Activated CD8-positive, alpha-beta T cell treated with anti-CD3 and anti-CD28 coated beads, Interleukin-2, amount 10 ng/mL, durations not matched to agents 7 days and 5 days (primary cell): ENCODE measurements at regions of chr21 and their contacts with region 1.

Region 1: DNA sequence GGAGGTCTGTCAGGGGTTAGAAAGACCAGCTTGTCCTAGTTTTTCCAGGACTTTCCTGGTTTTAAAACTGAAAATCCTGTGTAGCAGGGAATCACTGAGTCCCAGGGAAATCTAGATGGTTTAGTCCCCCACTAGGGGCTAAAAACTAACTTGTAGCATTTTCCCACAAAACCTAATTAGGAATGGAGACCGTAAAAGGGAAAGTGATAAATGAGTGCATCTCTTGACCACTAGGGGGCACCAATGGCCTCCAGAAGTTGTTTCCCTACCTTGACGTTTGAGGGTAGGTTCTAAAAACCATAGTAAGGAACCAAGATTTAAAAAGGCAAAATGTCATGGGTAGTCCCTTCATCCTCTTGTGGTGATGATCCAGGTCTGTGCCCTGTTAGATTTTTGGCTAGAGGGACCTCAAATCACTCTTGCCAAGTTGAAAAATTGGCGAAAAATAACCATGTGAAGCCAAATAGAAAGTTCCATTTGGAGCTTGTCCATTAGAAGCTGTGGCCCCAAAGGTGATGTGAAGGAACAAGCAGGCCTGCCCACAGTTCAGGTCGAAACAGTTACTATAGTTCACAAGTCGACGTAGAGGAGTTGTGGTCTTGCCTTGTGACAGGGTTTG is 24.5 kb downstream of the CLIC6 start:
- DNase-seq: peak; percentile 65
- ATAC-seq: peak; percentile 30
- H3K4me3 Mint-ChIP-seq: no peak overlapping the region
- H3K27ac Mint-ChIP-seq: no peak overlapping the region
- H3K4me1 Mint-ChIP-seq: peaks cover 5% of the 10 kb centered on the region
- H3K27me3 Mint-ChIP-seq: peaks cover 18% of the 10 kb centered on the region

Region 2: DNA sequence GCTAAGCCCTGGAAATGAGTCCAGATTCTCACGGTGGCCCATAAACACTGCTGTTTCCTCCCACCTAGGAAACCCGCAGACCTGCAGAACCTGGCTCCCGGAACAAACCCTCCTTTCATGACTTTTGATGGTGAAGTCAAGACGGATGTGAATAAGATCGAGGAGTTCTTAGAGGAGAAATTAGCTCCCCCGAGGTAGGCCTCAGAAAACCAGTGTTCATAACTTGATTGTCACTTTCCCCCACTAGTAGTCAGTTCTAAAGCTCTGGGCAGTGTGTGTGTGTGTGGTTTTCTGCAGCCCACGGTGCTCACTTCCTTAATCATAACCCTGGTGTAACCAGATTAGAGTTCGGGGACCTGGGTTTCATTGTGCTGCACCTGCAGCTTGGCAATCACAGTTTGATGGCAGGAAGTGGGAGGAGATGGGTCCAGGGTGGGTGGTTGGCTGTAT is 14.6 kb after region 1 on chr21:
- CTCF ChIA-PET with region 1: interaction called, 16 read pairs
- POLR2A ChIA-PET with region 1: no interaction called
- DNase-seq: peak; percentile 72
- ATAC-seq: peak; percentile 86
- H3K4me3 Mint-ChIP-seq: peak overlapping the region; percentile 37
- H3K27ac Mint-ChIP-seq: peak overlapping the region; percentile 75
- H3K4me1 Mint-ChIP-seq: peaks cover 31% of the 10 kb centered on the region
- H3K27me3 Mint-ChIP-seq: peaks cover 18% of the 10 kb centered on the region

Region 3: GRCh38 chr21:35840197-35840799 is 1147.0 kb after region 1 on chr21:
- CTCF ChIA-PET with region 1: interaction called, 17 read pairs
- POLR2A ChIA-PET with region 1: no interaction called
- DNase-seq: peak; percentile 74
- ATAC-seq: no peak
- H3K4me3 Mint-ChIP-seq: no peak overlapping the region
- H3K27ac Mint-ChIP-seq: no peak overlapping the region
- H3K4me1 Mint-ChIP-seq: no peaks in the 10 kb centered on the region
- H3K27me3 Mint-ChIP-seq: no peaks in the 10 kb centered on the region